Calu3 (cell line): ENCODE measurements at regions of chr1 and their contacts with region 1.

Region 1: GRCh38 chr1:55021965-55022546 is 17.3 kb upstream of the PCSK9 start:
- DNase-seq: peak; percentile 94
- H3K4me3 Mint-ChIP-seq: no peak overlapping the region
- H3K27ac Mint-ChIP-seq: no peak overlapping the region
- H3K4me1 Mint-ChIP-seq: peaks cover 24% of the 10 kb centered on the region
- H3K27me3 Mint-ChIP-seq: peaks cover 36% of the 10 kb centered on the region
- CTCF ChIP-seq: peak; percentile 94

Region 2: DNA sequence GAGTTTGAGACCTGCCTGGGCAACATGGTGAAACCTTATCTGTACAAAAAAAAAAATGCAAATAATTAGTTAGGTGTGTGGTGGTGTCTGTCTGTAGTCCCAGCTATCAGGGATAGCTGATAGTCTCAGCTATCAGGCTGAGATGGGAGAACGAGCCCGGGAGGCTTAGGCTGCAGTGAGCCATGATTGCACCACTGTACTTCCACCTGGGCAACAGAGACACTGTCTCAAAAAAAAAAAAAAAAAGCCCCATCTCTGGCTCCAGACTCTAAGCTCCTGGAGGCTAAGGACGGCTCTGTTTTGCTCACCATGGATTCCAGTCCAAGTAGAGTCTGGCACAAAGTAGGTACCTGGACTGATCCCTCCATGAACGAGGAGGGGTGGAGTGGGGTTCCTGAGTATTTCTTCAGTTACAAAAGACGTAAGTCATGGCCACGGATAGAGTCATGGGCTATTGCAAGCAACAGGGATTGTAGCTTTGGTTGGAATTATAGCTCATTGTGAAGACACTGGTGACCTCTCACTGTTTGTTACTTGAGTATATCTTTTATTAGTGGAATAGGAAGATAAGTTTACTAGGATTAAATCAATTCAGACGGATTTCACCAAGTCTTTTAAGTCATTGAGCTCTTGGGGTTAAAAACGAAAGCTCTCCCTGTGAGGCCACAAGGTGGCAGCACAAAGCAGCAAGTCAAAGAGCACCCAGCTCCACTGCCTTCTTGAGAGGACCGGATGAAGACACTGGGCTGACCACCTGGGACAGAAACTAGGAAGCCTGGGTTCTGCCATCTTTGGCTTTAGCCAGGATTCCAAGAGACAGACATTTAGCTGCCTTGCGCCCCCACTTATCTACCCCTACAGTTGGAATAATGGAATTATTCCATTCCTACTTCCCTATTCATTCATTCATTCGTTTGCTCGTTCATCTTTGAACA is 77.2 kb before region 1 on chr1:
- CTCF ChIA-PET with region 1: interaction called, 93 read pairs
- intact Hi-C with region 1: loop called (anchors 1 kb)
- DNase-seq: peak; percentile 78
- H3K4me3 Mint-ChIP-seq: peak overlapping the region; percentile 9
- H3K27ac Mint-ChIP-seq: no peak overlapping the region
- H3K4me1 Mint-ChIP-seq: peaks cover 14% of the 10 kb centered on the region
- H3K27me3 Mint-ChIP-seq: peaks cover 16% of the 10 kb centered on the region
- CTCF ChIP-seq: peak; percentile 77

Region 3: GRCh38 chr1:54950369-54951163 is 71.5 kb before region 1 on chr1:
- CTCF ChIA-PET with region 1: interaction called, 93 read pairs
- intact Hi-C with region 1: loop called (anchors 1 kb)
- DNase-seq: peak; percentile 76
- H3K4me3 Mint-ChIP-seq: peak overlapping the region; percentile 43
- H3K27ac Mint-ChIP-seq: peak overlapping the region; percentile 17
- H3K4me1 Mint-ChIP-seq: peaks cover 48% of the 10 kb centered on the region
- H3K27me3 Mint-ChIP-seq: no peaks in the 10 kb centered on the region
- CTCF ChIP-seq: peak; percentile 68

Region 4: DNA sequence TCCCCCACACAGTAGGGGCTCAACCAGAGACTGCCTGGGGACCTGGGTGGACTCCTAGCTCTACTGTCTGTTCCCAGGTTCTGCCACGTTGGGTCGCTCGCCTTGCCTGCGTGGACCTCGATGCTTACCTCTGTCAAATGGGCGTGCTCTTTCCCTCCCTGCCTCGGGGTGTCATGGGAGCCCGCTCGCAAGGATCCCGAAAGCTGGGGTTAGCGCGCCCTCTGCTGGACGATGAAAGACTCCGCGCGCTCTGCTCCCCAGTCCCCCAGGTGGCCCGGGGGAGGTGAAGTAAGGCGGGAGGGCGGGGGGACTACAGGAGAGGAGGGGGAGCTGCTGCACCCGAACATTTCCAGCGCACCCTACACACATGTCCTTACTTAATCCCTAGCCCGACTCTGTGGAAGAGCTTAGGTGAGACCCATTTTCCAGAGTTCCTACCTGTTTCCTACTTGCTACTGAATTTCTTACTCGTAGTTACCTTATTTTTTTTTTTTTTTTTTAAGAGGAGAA is 25.6 kb before region 1 on chr1:
- CTCF ChIA-PET with region 1: interaction called, 12 read pairs
- intact Hi-C with region 1: no loop called
- DNase-seq: peak; percentile 88
- H3K4me3 Mint-ChIP-seq: peak overlapping the region; percentile 61
- H3K27ac Mint-ChIP-seq: peak overlapping the region; percentile 23
- H3K4me1 Mint-ChIP-seq: peaks cover 9% of the 10 kb centered on the region
- H3K27me3 Mint-ChIP-seq: peaks cover 44% of the 10 kb centered on the region
- CTCF ChIP-seq: peak; percentile 94

Region 5: GRCh38 chr1:55007625-55008024 is 14.4 kb before region 1 on chr1:
- CTCF ChIA-PET with region 1: interaction called, 15 read pairs
- intact Hi-C with region 1: no loop called
- DNase-seq: no peak
- H3K4me3 Mint-ChIP-seq: no peak overlapping the region
- H3K27ac Mint-ChIP-seq: no peak overlapping the region
- H3K4me1 Mint-ChIP-seq: peaks cover 11% of the 10 kb centered on the region
- H3K27me3 Mint-ChIP-seq: peaks cover 21% of the 10 kb centered on the region
- CTCF ChIP-seq: no peak